T-cell (primary cell): ENCODE measurements at regions of chr6 and their contacts with region 1.

Region 1: GRCh38 chr6:70686548-70687133 is 19.0 kb downstream of the SMAP1 start:
- DNase-seq: peak in 3 of 35 experiments; percentile 24 to 66 (median 26)
- ATAC-seq: peak in 1 of 4 experiments; percentile 34
- H3K4me3 ChIP-seq: no peak overlapping the region
- H3K4me3 Mint-ChIP-seq: no peak overlapping the region
- H3K27ac ChIP-seq: no peak overlapping the region
- H3K27ac Mint-ChIP-seq: no peak overlapping the region
- H3K4me1 ChIP-seq: peaks cover 0 to 15% of the 10 kb centered on the region in 2 experiments
- H3K4me1 Mint-ChIP-seq: peaks cover 61 to 63% (median 62%) of the 10 kb centered on the region in 3 donors
- H3K27me3 ChIP-seq: no peaks in the 10 kb centered on the region
- H3K27me3 Mint-ChIP-seq: no peaks in the 10 kb centered on the region

Region 2: GRCh38 chr6:70310063-70310694 is 376.5 kb before region 1 on chr6:
- CTCF ChIA-PET with region 1: interaction called, 4 to 12 read pairs
- POLR2A ChIA-PET with region 1: no interaction called
- DNase-seq: peak in 2 of 35 experiments; percentile 3 to 45
- ATAC-seq: no peak
- H3K4me3 ChIP-seq: no peak overlapping the region
- H3K4me3 Mint-ChIP-seq: no peak overlapping the region
- H3K27ac ChIP-seq: no peak overlapping the region
- H3K27ac Mint-ChIP-seq: no peak overlapping the region
- H3K4me1 ChIP-seq: no peaks in the 10 kb centered on the region
- H3K4me1 Mint-ChIP-seq: no peaks in the 10 kb centered on the region
- H3K27me3 ChIP-seq: peaks cover 0 to 4% of the 10 kb centered on the region in 2 experiments
- H3K27me3 Mint-ChIP-seq: peaks cover 8 to 41% of the 10 kb centered on the region in 2 donors

Region 3: DNA sequence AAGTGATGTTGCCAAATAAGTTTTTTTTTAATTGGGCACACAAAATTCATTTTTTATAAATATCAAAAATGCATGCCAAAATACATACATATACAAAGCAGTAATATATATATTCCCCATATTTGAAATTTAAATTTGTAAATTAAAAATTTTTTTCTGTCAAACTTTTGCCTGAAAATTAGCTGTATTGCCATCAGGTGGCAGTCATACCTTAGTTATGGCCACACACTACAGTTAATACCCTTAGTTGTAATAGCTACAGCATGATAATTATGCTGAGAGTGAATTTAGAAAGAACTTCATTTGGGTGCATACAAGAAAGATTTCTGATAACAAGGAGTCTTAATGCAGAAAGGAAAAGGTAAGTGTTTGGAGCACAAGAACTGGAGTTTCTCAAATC is 166.1 kb before region 1 on chr6:
- CTCF ChIA-PET with region 1: interaction called, 12 to 56 read pairs
- POLR2A ChIA-PET with region 1: no interaction called
- DNase-seq: peak in 5 of 35 experiments; percentile 2 to 50 (median 5)
- ATAC-seq: no peak
- H3K4me3 ChIP-seq: no peak overlapping the region
- H3K4me3 Mint-ChIP-seq: no peak overlapping the region
- H3K27ac ChIP-seq: no peak overlapping the region
- H3K27ac Mint-ChIP-seq: no peak overlapping the region
- H3K4me1 ChIP-seq: peaks cover 0 to 4% of the 10 kb centered on the region in 2 experiments
- H3K4me1 Mint-ChIP-seq: peaks cover 7 to 16% (median 7%) of the 10 kb centered on the region in 3 donors
- H3K27me3 ChIP-seq: no peaks in the 10 kb centered on the region
- H3K27me3 Mint-ChIP-seq: no peaks in the 10 kb centered on the region

Region 4: DNA sequence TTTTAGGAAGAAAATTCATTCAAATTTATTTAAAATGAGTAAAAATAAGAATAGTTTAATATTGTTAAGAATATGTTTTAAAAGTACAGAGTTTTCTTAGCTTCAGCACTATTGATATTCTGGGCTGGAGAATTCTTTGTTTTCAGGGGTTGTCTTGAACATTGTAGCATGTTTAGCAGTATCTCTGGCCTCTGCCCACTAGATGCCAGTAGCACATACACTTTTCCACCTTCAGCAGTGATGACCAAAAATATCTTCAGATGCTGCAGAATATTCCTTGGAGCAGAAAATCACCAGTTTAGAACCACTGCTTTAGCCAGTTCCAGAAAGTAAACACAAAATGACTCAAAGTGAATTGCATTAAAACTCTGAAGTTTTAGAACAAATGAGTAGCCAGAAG is 139.3 kb before region 1 on chr6:
- CTCF ChIA-PET with region 1: interaction called, 9 to 10 read pairs
- POLR2A ChIA-PET with region 1: no interaction called
- DNase-seq: peak in 1 of 35 experiments; percentile 37
- ATAC-seq: peak in 1 of 4 experiments; percentile 51
- H3K4me3 ChIP-seq: no peak overlapping the region
- H3K4me3 Mint-ChIP-seq: no peak overlapping the region
- H3K27ac ChIP-seq: no peak overlapping the region
- H3K27ac Mint-ChIP-seq: no peak overlapping the region
- H3K4me1 ChIP-seq: no peaks in the 10 kb centered on the region
- H3K4me1 Mint-ChIP-seq: no peaks in the 10 kb centered on the region
- H3K27me3 ChIP-seq: no peaks in the 10 kb centered on the region
- H3K27me3 Mint-ChIP-seq: no peaks in the 10 kb centered on the region

Region 5: GRCh38 chr6:70673601-70674000 is 13.0 kb before region 1 on chr6:
- CTCF ChIA-PET with region 1: interaction called, 6 to 11 read pairs
- POLR2A ChIA-PET with region 1: interaction called in 1 of 2 experiments, 5 read pairs
- DNase-seq: no peak
- ATAC-seq: peak in 1 of 4 experiments; percentile 41
- H3K4me3 ChIP-seq: no peak overlapping the region
- H3K4me3 Mint-ChIP-seq: no peak overlapping the region
- H3K27ac ChIP-seq: no peak overlapping the region
- H3K27ac Mint-ChIP-seq: no peak overlapping the region
- H3K4me1 ChIP-seq: peaks cover 6 to 18% of the 10 kb centered on the region in 2 experiments
- H3K4me1 Mint-ChIP-seq: peaks cover 69 to 76% (median 75%) of the 10 kb centered on the region in 3 donors
- H3K27me3 ChIP-seq: no peaks in the 10 kb centered on the region
- H3K27me3 Mint-ChIP-seq: no peaks in the 10 kb centered on the region

Region 6: GRCh38 chr6:70706491-70707123 is 20.0 kb after region 1 on chr6:
- CTCF ChIA-PET with region 1: interaction called, 7 to 10 read pairs
- POLR2A ChIA-PET with region 1: no interaction called
- DNase-seq: peak in 2 of 35 experiments; percentile 6 to 72
- ATAC-seq: no peak
- H3K4me3 ChIP-seq: no peak overlapping the region
- H3K4me3 Mint-ChIP-seq: no peak overlapping the region
- H3K27ac ChIP-seq: no peak overlapping the region
- H3K27ac Mint-ChIP-seq: no peak overlapping the region
- H3K4me1 ChIP-seq: no peaks in the 10 kb centered on the region
- H3K4me1 Mint-ChIP-seq: peaks cover 64 to 71% (median 65%) of the 10 kb centered on the region in 3 donors
- H3K27me3 ChIP-seq: no peaks in the 10 kb centered on the region
- H3K27me3 Mint-ChIP-seq: no peaks in the 10 kb centered on the region

Region 7: GRCh38 chr6:70839286-70840266 is 152.9 kb after region 1 on chr6:
- CTCF ChIA-PET with region 1: no interaction called
- POLR2A ChIA-PET with region 1: no interaction called
- DNase-seq: no peak
- ATAC-seq: no peak
- H3K4me3 ChIP-seq: no peak overlapping the region
- H3K4me3 Mint-ChIP-seq: no peak overlapping the region
- H3K27ac ChIP-seq: no peak overlapping the region
- H3K27ac Mint-ChIP-seq: no peak overlapping the region
- H3K4me1 ChIP-seq: no peaks in the 10 kb centered on the region
- H3K4me1 Mint-ChIP-seq: peaks cover 0 to 11% (median 2%) of the 10 kb centered on the region in 3 donors
- H3K27me3 ChIP-seq: no peaks in the 10 kb centered on the region
- H3K27me3 Mint-ChIP-seq: no peaks in the 10 kb centered on the region